ENCODE measurements at regions of chr6 and their contacts with region 1.

Region 1: GRCh38 chr6:22471132-22471690 is 98.2 kb upstream of the HDGFL1 start:
- DNase-seq: peak in 1 of 2 experiments; percentile 31
- H3K4me3 ChIP-seq: no peak overlapping the region
- H3K4me3 Mint-ChIP-seq: no peak overlapping the region
- H3K27ac Mint-ChIP-seq: no peak overlapping the region
- H3K4me1 ChIP-seq: no peaks in the 10 kb centered on the region
- H3K4me1 Mint-ChIP-seq: peaks cover 14% of the 10 kb centered on the region
- H3K27me3 ChIP-seq: no peaks in the 10 kb centered on the region
- H3K27me3 Mint-ChIP-seq: no peaks in the 10 kb centered on the region
- CTCF ChIP-seq: peak; percentile 39 to 59

Region 2: GRCh38 chr6:21831521-21832291 is 639.5 kb before region 1 on chr6:
- CTCF ChIA-PET with region 1: no interaction called
- POLR2A ChIA-PET with region 1: no interaction called
- intact Hi-C with region 1: no loop called
- DNase-seq: no peak
- H3K4me3 ChIP-seq: no peak overlapping the region
- H3K4me3 Mint-ChIP-seq: no peak overlapping the region
- H3K27ac Mint-ChIP-seq: no peak overlapping the region
- H3K4me1 ChIP-seq: peaks cover 18% of the 10 kb centered on the region
- H3K4me1 Mint-ChIP-seq: peaks cover 21% of the 10 kb centered on the region
- H3K27me3 ChIP-seq: no peaks in the 10 kb centered on the region
- H3K27me3 Mint-ChIP-seq: no peaks in the 10 kb centered on the region
- CTCF ChIP-seq: no peak

Region 3: DNA sequence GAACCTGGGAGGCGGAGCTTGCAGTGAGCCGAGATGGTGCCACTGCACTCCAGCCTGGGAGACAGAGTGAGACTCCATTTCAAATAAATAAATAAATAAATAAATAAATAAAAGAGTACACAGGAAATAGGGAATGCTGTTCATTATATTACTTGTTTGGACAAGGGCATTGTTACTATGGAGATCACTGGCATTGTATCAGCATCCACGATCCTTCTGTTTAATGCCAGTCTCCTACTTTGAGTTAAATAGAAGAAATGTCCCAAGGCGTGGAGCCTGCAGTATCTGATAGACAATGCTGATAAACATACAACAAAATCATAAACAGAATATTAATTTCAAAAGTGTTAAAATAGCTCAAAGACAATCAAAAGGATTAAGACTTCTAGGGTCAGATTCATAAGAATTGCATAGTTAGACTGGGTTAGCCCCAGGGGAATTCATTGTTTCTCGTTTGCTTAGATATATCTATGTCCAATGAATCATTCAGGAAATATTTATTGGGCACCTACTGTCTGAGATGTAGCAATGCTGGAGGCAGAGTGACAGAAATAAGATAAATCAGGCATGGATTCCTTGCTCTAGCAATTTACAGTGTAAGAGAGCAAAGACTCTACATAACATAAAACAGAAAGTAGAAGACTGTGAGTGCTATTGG is 50.1 kb before region 1 on chr6:
- CTCF ChIA-PET with region 1: no interaction called
- POLR2A ChIA-PET with region 1: no interaction called
- intact Hi-C with region 1: no loop called
- DNase-seq: no peak
- H3K4me3 ChIP-seq: no peak overlapping the region
- H3K4me3 Mint-ChIP-seq: no peak overlapping the region
- H3K27ac Mint-ChIP-seq: no peak overlapping the region
- H3K4me1 ChIP-seq: no peaks in the 10 kb centered on the region
- H3K4me1 Mint-ChIP-seq: no peaks in the 10 kb centered on the region
- H3K27me3 ChIP-seq: no peaks in the 10 kb centered on the region
- H3K27me3 Mint-ChIP-seq: no peaks in the 10 kb centered on the region
- CTCF ChIP-seq: no peak

Region 4: GRCh38 chr6:23637296-23637695 is 1166.1 kb after region 1 on chr6:
- CTCF ChIA-PET with region 1: no interaction called
- POLR2A ChIA-PET with region 1: interaction called, 10 read pairs
- intact Hi-C with region 1: no loop called
- DNase-seq: no peak
- H3K4me3 ChIP-seq: no peak overlapping the region
- H3K4me3 Mint-ChIP-seq: no peak overlapping the region
- H3K27ac Mint-ChIP-seq: no peak overlapping the region
- H3K4me1 ChIP-seq: no peaks in the 10 kb centered on the region
- H3K4me1 Mint-ChIP-seq: no peaks in the 10 kb centered on the region
- H3K27me3 ChIP-seq: no peaks in the 10 kb centered on the region
- H3K27me3 Mint-ChIP-seq: peaks cover 2% of the 10 kb centered on the region
- CTCF ChIP-seq: no peak